ENCODE measurements at regions of chr7 and their contacts with region 1.

Region 1: DNA sequence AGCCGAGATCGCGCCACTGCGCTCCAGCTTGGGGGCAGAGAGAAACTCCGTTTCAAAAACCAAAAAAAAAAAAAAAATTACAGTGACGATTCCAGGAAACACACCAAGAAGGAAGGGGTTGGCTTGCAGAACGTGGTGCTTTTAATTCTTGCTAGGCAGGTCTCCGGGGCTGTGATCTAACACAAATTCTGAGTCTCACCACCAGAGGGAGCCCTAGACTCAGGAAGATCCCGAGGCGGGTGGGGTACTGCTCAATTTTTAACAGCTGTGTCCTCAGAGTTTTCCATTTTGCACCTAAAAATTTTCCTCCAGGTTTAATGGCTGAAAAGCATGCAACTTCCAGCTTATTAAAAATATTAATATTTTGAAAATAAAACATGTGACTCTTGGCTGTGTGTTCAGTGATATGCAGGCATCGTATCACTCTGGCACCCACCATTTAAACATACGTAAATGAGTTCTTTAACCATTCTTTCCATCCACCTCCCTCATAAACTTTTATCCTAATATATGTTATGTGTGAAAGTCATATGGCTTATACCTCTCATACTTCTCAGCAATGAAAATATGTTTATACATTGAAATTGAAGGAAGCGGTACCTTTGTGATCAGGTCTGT is 26.5 kb upstream of the NUB1 start:
- DNase-seq: peak; percentile 87
- ATAC-seq: peak; percentile 89
- H3K4me3 Mint-ChIP-seq: peak overlapping the region; percentile 5
- H3K27ac Mint-ChIP-seq: no peak overlapping the region
- H3K4me1 Mint-ChIP-seq: peaks cover 10% of the 10 kb centered on the region
- H3K27me3 Mint-ChIP-seq: no peaks in the 10 kb centered on the region
- CTCF ChIP-seq: peak; percentile 88

Region 2: DNA sequence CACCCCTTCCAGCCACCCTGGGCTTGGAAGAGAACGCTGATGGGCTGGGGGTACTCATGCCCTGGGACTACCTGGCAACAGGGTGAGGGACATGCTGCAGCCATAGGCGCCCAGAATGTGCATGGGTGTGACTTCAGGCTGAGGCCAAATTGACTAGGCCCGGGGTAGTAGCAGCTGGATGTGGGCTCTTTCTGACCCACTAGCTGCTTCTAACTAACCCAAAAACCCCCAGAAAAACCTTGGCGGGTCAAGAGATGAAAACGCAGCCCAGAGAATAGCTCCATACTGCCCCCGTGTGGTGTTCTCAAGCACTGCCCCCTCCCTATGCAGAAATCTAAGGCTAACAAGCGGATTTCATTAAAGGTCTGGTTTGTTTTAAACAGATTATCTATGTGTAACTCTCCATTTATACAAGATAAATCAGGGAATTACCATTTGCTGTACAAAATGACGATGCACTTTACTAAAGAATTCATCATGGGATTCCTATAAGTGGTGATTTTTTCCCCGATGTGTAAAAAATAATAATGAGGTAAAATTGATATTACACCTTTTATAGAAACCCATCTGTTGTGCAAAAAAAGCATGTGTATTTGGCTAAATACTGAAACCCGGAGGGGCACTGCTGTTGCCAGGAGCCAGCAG is 70.8 kb before region 1 on chr7:
- CTCF ChIA-PET with region 1: interaction called, 17 read pairs
- POLR2A ChIA-PET with region 1: no interaction called
- intact Hi-C with region 1: no loop called
- DNase-seq: peak; percentile 84
- ATAC-seq: peak; percentile 47
- H3K4me3 Mint-ChIP-seq: peak overlapping the region; percentile 29
- H3K27ac Mint-ChIP-seq: no peak overlapping the region
- H3K4me1 Mint-ChIP-seq: peaks cover 37% of the 10 kb centered on the region
- H3K27me3 Mint-ChIP-seq: peaks cover 20% of the 10 kb centered on the region
- CTCF ChIP-seq: peak; percentile 90

Region 3: GRCh38 chr7:151327659-151328058 is 12.5 kb after region 1 on chr7:
- CTCF ChIA-PET with region 1: interaction called, 71 read pairs
- POLR2A ChIA-PET with region 1: no interaction called
- intact Hi-C with region 1: no loop called
- DNase-seq: no peak
- ATAC-seq: no peak
- H3K4me3 Mint-ChIP-seq: no peak overlapping the region
- H3K27ac Mint-ChIP-seq: no peak overlapping the region
- H3K4me1 Mint-ChIP-seq: no peaks in the 10 kb centered on the region
- H3K27me3 Mint-ChIP-seq: no peaks in the 10 kb centered on the region
- CTCF ChIP-seq: no peak

Region 4: GRCh38 chr7:151341357-151342101 is 26.4 kb after region 1 on chr7 and contains the start of gene NUB1:
- CTCF ChIA-PET with region 1: interaction called, 35 read pairs
- POLR2A ChIA-PET with region 1: interaction called, 14 read pairs
- intact Hi-C with region 1: no loop called
- DNase-seq: peak; percentile 94
- ATAC-seq: peak; percentile 92
- H3K4me3 Mint-ChIP-seq: peak within 1 kb of the TSS; percentile 75
- H3K27ac Mint-ChIP-seq: peak within 1 kb of the TSS; percentile 82
- H3K4me1 Mint-ChIP-seq: peaks cover 48% of the 10 kb centered on the region
- H3K27me3 Mint-ChIP-seq: no peaks in the 10 kb centered on the region
- CTCF ChIP-seq: no peak
- total RNA-seq, gene NUB1: 41.0 to 42.5 TPM

Region 5: GRCh38 chr7:151361193-151361959 is 46.2 kb after region 1 on chr7:
- CTCF ChIA-PET with region 1: interaction called, 226 read pairs
- POLR2A ChIA-PET with region 1: no interaction called
- intact Hi-C with region 1: no loop called
- DNase-seq: no peak
- ATAC-seq: no peak
- H3K4me3 Mint-ChIP-seq: no peak overlapping the region
- H3K27ac Mint-ChIP-seq: no peak overlapping the region
- H3K4me1 Mint-ChIP-seq: no peaks in the 10 kb centered on the region
- H3K27me3 Mint-ChIP-seq: no peaks in the 10 kb centered on the region
- CTCF ChIP-seq: no peak

Measured in activated CD8-positive, alpha-beta T cell treated with anti-CD3 and anti-CD28 coated beads for 36 hours (primary cell).